ENCODE measurements at regions of chr12 and their contacts with region 1.

Region 1: DNA sequence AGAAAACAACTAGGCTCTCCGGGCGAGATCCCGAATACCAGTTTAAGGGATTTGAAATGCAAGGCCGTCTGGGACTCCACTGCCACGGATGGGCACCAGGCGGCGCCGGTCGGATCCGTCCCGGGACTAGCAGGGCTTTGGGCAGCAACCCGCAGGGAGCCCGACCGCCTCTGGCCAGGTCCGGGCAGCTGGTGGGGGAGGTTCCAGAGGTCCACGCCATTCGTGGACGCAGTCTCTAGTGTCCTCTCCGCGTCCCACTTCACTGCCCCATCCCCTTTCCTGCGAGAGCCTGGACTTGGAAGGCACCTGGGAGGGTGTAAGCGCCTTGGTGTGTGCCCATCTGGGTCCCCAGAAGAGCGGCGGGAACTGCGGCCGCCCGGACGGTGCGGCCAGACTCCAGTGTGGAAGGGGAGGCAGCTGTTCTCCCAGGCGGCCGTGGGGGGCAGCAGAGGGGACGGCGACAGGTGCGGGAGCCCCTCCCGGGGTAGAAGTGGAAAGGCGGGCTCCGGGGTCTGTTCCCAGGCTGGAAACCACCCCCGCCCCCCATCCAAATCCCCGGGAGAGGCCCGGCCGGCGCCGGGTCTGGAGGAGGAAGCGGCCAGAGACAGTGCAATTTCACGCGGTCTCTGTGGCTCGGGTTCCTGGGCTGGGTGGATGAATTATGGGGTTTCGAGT is 838 bp upstream of the ERBB3 start:
- DNase-seq: peak; percentile 89
- ATAC-seq: peak; percentile 81
- H3K4me3 ChIP-seq: peak overlapping the region; percentile 86
- H3K27ac ChIP-seq: peak overlapping the region; percentile 82
- H3K4me1 ChIP-seq: peaks cover 19% of the 10 kb centered on the region
- H3K27me3 ChIP-seq: no peaks in the 10 kb centered on the region
- CTCF ChIP-seq: peak; percentile 83

Region 2: DNA sequence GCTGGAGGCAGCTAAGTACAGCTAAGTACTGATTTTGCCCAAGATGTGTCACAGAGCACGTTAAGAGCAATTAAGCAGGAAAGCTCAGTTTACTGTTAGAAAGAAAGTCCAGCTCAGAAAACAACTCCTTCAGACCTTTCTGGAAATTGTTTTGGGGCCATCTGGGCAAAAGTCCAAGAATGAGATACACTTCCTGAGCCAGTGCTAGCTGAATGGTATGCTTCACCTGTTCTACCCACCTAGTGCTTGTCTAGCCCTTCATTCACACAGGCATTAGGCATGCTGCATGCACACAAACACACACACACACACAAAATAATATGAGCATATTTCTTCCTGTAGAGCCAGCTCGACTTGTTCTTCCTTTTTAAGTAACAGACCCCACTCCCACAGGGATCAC is 64.9 kb before region 1 on chr12:
- CTCF ChIA-PET with region 1: no interaction called
- POLR2A ChIA-PET with region 1: no interaction called
- intact Hi-C with region 1: no loop called
- DNase-seq: peak; percentile 18
- ATAC-seq: no peak
- H3K4me3 ChIP-seq: no peak overlapping the region
- H3K27ac ChIP-seq: no peak overlapping the region
- H3K4me1 ChIP-seq: 0 out of 2 replicates have a peak, but pooled peaks cover 4% of the 10 kb centered on the region
- H3K27me3 ChIP-seq: no peaks in the 10 kb centered on the region
- CTCF ChIP-seq: no peak

Region 3: GRCh38 chr12:56104109-56104814 is 25.1 kb after region 1 on chr12 and contains the start of gene PA2G4:
- CTCF ChIA-PET with region 1: interaction called, 5 read pairs
- POLR2A ChIA-PET with region 1: interaction called, 3 read pairs
- intact Hi-C with region 1: loop called (anchors 1 kb)
- DNase-seq: peak; percentile 100
- ATAC-seq: peak; percentile 96
- H3K4me3 ChIP-seq: peak within 1 kb of the TSS; percentile 91
- H3K27ac ChIP-seq: peak within 1 kb of the TSS; percentile 81
- H3K4me1 ChIP-seq: peaks cover 25% of the 10 kb centered on the region
- H3K27me3 ChIP-seq: no peaks in the 10 kb centered on the region
- CTCF ChIP-seq: no peak
- total RNA-seq, gene PA2G4: 391 and 406 TPM in 2 replicates

Region 4: GRCh38 chr12:56688129-56688845 is 609.2 kb after region 1 on chr12 and contains the start of gene PTGES3:
- CTCF ChIA-PET with region 1: interaction called, 12 read pairs
- POLR2A ChIA-PET with region 1: no interaction called
- intact Hi-C with region 1: no loop called
- DNase-seq: peak; percentile 98
- ATAC-seq: peak; percentile 82
- H3K4me3 ChIP-seq: peak within 1 kb of the TSS; percentile 95
- H3K27ac ChIP-seq: peak within 1 kb of the TSS; percentile 87
- H3K4me1 ChIP-seq: peaks cover 10% of the 10 kb centered on the region
- H3K27me3 ChIP-seq: no peaks in the 10 kb centered on the region
- CTCF ChIP-seq: no peak
- total RNA-seq, gene PTGES3: 165 and 172 TPM in 2 replicates

Measured in PC-3 (cell line).